ENCODE measurements at regions of chr9 and their contacts with region 1.

Region 1: GRCh38 chr9:19342947-19343346 is 37.1 kb downstream of the RPS6 start:
- DNase-seq: no peak
- ATAC-seq: no peak

Region 2: GRCh38 chr9:19085295-19085694 is 257.7 kb before region 1 on chr9:
- intact Hi-C with region 1: loop called (anchors 10 kb)
- DNase-seq: no peak
- ATAC-seq: no peak

Region 3: GRCh38 chr9:19369107-19369506 is 26.2 kb after region 1 on chr9:
- intact Hi-C with region 1: loop called (anchors 2 kb)
- DNase-seq: no peak
- ATAC-seq: no peak

Region 4: GRCh38 chr9:19568946-19569345 is 226.0 kb after region 1 on chr9:
- intact Hi-C with region 1: no loop called
- DNase-seq: no peak
- ATAC-seq: no peak

Region 5: DNA sequence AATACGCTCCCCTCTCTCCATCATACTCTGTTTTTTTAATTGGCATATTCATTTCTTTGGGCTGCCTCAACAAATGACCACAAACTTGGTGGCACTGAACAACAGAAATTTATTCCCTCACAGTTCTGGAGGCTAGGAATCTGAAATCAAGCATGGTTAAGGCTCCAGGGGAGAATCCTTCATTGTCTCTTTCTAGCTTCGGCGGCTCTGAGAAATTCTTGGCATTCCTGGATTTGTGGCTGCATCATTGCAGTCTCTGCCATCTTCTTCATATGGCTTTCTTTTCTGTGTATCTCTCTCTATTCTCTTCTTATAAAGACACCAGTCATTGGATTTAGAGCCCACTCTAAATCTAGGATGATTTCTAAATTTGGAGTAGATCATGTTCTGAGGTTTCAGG is 456.8 kb after region 1 on chr9:
- intact Hi-C with region 1: no loop called
- DNase-seq: no peak
- ATAC-seq: no peak